HEK293 (cell line): ENCODE measurements at regions of chr10 and their contacts with region 1.

Region 1: DNA sequence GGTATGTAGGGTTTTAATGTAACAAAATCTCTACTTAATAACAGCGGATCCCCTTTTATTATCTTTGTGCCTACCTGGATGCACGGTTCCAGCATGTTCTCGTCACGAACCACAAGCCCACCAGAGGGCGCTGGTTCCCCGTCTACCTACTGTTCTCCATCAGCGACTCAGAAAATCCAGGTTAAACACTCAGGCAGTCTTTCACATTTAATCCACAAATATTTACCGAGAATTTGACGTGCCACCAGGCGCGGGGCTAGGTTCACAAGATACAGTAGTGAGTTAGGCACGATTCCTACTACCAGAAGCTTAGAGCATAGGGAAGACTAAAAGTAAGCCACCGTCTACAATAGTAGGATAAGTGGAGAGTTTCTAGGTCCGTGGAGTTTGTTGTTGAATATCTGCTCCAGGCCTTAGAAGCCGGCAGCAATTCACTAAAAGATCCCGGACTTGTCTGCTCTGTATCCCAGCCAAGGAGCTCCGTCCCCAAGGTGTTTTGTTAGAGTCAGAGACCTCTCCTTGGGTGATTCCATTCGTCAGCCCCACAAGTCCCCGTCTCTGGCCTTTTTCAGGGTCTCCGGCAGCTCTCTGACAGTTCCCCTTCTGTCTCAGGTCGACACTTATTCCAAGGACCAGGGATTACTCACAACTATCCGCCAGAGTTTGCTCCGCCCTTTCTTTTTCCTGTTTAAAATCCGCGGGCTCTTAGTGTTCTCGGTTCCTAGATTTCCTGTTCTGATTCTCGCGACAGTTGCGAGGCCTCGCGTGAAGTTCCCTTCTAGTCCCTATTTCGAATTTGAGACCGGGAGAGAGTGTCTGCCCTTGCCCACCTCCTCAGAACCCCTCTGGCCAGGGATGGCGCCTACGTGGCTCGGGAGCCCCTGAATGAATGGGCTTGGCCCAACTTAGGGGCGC is 1.5 kb upstream of the KAZALD1 start:
- H3K4me3 ChIP-seq: peak overlapping the region; percentile 91
- H3K27ac ChIP-seq: peak overlapping the region; percentile 97
- H3K4me1 ChIP-seq: peaks cover 18% of the 10 kb centered on the region
- CTCF ChIP-seq: peak; percentile 75

Region 2: DNA sequence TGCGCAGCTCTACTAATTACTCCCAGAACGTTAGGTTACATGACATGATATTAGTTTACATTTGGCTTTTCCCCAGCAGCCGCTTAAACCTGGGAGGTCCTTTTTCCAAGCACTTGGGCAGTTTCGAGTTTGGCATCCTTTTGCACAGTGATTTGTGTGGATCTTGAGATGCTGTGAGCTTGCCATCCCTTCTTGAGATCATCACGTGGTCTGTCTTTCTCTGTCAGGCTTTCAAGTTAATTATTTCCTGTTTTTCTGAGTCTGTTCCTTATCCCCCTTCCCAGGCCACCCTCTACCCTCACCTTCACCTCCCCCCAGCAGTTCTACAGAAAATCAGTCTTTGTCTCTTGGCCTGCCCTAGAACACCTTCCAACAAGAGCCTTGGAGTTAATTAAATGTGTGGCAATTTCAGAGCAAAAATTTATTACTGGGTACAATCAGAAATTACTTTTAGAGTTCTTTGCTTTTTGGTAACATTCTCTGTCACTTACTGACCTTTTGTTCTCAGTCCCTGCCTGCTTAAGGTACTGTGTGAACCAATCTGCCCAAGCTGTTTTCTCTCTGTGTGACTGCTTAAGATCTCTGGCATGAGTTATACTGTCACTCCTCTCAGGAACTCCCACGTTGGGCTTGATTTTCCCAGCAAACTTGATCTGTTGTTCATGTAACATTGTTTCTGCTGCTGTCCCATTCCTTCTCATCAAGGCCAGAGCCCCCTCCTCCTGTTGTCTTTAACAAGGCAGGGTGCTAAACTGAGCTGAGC is 150.6 kb before region 1 on chr10:
- CTCF ChIA-PET with region 1: no interaction called
- POLR2A ChIA-PET with region 1: no interaction called
- H3K4me3 ChIP-seq: no peak overlapping the region
- H3K27ac ChIP-seq: no peak overlapping the region
- H3K4me1 ChIP-seq: peaks cover 10% of the 10 kb centered on the region; the same call in 1 of the 2 replicates
- CTCF ChIP-seq: no peak

Region 3: GRCh38 chr10:101031128-101031795 is 29.0 kb before region 1 on chr10 and contains the starts of genes PDZD7 and SFXN3:
- CTCF ChIA-PET with region 1: interaction called, 12 read pairs
- POLR2A ChIA-PET with region 1: interaction called, 9 read pairs
- H3K4me3 ChIP-seq: peak within 1 kb of the TSS; percentile 45
- H3K27ac ChIP-seq: peak within 1 kb of the TSS; percentile 64
- H3K4me1 ChIP-seq: peaks cover 20% of the 10 kb centered on the region
- CTCF ChIP-seq: no peak